ENCODE measurements at regions of chr5 and their contacts with region 1.

Region 1: DNA sequence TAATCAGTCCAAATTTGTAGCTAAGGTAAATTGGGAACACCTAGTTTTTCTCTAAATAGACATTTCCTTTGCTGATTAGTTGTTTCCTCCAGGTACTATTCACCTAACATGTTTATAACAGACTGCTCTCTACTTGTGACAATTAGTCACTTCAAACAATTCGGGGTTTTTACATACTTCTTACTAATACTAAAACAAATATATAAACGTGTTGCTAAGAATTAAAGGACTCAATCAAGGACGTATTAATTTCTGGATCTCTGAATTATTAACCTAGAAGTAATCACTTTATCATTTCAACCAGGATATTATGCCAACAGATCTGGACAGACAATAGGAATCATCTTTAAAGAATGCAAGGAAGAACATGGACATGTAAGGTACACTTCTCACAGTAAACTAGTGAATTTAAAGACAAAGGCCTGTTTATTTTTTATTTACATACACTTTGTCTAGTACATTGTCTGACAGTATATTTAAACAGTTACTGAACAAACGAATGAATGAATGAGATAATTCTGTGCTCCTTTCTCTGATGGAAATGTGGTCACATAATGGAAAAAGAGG is 22.3 kb downstream of the PJA2 start:
- DNase-seq: no peak
- ATAC-seq: no peak
- H3K4me3 ChIP-seq: no peak overlapping the region
- H3K4me3 Mint-ChIP-seq: no peak overlapping the region
- H3K27ac ChIP-seq: no peak overlapping the region
- H3K27ac Mint-ChIP-seq: no peak overlapping the region
- H3K4me1 ChIP-seq: peaks cover 3% of the 10 kb centered on the region
- H3K4me1 Mint-ChIP-seq: peaks cover 85% of the 10 kb centered on the region
- H3K27me3 ChIP-seq: no peaks in the 10 kb centered on the region
- H3K27me3 Mint-ChIP-seq: no peaks in the 10 kb centered on the region
- CTCF ChIP-seq: no peak

Region 2: DNA sequence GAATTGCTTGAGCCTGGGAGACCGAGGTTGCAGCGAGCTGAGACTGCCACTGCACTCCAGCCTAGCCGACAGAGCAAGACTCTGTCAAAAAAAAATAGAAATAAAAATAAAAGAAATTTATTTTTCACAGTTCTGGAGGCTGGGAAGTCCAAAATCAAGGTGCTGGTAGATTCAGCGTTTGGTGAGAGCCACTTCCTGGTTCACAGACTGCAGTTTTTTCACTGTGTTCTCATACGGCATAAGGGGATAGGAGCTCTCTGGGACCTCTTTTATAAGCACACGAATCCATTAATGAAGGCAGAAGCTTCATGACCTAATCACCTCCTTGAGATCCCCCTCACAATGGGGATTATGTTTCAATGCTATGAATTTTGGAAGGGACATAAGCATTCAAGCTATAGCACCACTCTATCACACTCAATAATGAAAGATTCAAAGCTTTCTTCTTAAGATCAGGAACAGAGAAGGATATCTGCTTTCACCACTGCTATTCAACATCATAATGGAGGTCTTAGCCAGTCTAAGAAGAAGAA is 17.0 kb after region 1 on chr5:
- CTCF ChIA-PET with region 1: no interaction called
- POLR2A ChIA-PET with region 1: interaction called, 9 read pairs
- intact Hi-C with region 1: loop called in 1 of 2 experiments (anchors 2 kb)
- DNase-seq: no peak
- ATAC-seq: no peak
- H3K4me3 ChIP-seq: no peak overlapping the region
- H3K4me3 Mint-ChIP-seq: peak overlapping the region; percentile 16
- H3K27ac ChIP-seq: no peak overlapping the region
- H3K27ac Mint-ChIP-seq: no peak overlapping the region
- H3K4me1 ChIP-seq: peaks cover 18% of the 10 kb centered on the region
- H3K4me1 Mint-ChIP-seq: peaks cover 73% of the 10 kb centered on the region
- H3K27me3 ChIP-seq: no peaks in the 10 kb centered on the region
- H3K27me3 Mint-ChIP-seq: no peaks in the 10 kb centered on the region
- CTCF ChIP-seq: no peak